ENCODE measurements at regions of chr15 and their contacts with region 1.

Region 1: GRCh38 chr15:73781038-73781925 is 28.1 kb upstream of the INSYN1 start:
- DNase-seq: peak; percentile 55
- H3K4me3 Mint-ChIP-seq: no peak overlapping the region
- H3K27ac Mint-ChIP-seq: no peak overlapping the region
- H3K4me1 Mint-ChIP-seq: no peaks in the 10 kb centered on the region
- H3K27me3 Mint-ChIP-seq: no peaks in the 10 kb centered on the region
- CTCF ChIP-seq: peak; percentile 38

Region 2: DNA sequence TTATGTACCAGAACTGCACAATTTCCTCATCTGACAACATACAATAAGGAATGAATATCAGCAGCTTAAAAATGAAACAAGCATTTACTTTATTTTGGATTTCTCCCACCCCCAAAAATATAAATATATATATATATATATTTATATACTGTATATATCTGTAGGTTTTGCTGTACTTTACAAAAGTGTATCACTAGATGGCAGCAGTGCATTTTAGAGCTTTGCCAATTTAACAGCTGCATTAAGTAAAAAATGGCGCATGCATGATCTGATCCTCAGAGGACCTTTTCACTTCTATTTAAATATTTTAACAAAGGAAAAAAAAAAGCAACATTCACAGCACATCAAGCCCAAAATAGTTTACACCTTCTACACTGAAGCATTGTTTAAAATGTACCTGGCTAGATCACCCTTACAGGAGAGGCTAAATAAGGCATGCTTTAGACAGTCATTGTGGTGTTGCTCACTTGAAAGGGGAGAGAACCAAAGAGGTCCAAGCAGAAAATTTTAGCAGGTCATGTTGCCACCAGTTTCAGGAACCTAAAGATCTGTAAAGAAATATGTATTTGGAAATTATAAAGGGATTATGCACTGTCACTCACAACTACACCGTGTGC is 220.7 kb before region 1 on chr15:
- CTCF ChIA-PET with region 1: no interaction called
- POLR2A ChIA-PET with region 1: no interaction called
- intact Hi-C with region 1: loop called (anchors 5 kb)
- DNase-seq: peak; percentile 72
- H3K4me3 Mint-ChIP-seq: no peak overlapping the region
- H3K27ac Mint-ChIP-seq: no peak overlapping the region
- H3K4me1 Mint-ChIP-seq: peaks cover 7% of the 10 kb centered on the region
- H3K27me3 Mint-ChIP-seq: no peaks in the 10 kb centered on the region
- CTCF ChIP-seq: peak; percentile 51